ENCODE measurements at regions of chr10 and their contacts with region 1.

Region 1: GRCh38 chr10:114304017-114304570 is 65.0 kb downstream of the VWA2 start:
- DNase-seq: peak; percentile 79 to 88 (median 85)
- ATAC-seq: peak; percentile 87
- H3K4me3 ChIP-seq: no peak overlapping the region
- H3K27ac ChIP-seq: peak overlapping the region in 2 of 4 donors; percentile 15 to 28
- H3K4me1 ChIP-seq: peaks cover 10% of the 10 kb centered on the region
- H3K27me3 ChIP-seq: no peaks in the 10 kb centered on the region
- CTCF ChIP-seq: peak; percentile 32 to 83 (median 78)
- POLR2A ChIP-seq: no peak

Region 2: GRCh38 chr10:113907166-113907565 is 396.9 kb before region 1 on chr10:
- intact Hi-C with region 1: no loop called
- DNase-seq: no peak
- ATAC-seq: no peak
- H3K4me3 ChIP-seq: no peak overlapping the region
- H3K27ac ChIP-seq: no peak overlapping the region
- H3K4me1 ChIP-seq: peaks cover 8% of the 10 kb centered on the region
- H3K27me3 ChIP-seq: no peaks in the 10 kb centered on the region
- CTCF ChIP-seq: no peak
- POLR2A ChIP-seq: no peak

Region 3: DNA sequence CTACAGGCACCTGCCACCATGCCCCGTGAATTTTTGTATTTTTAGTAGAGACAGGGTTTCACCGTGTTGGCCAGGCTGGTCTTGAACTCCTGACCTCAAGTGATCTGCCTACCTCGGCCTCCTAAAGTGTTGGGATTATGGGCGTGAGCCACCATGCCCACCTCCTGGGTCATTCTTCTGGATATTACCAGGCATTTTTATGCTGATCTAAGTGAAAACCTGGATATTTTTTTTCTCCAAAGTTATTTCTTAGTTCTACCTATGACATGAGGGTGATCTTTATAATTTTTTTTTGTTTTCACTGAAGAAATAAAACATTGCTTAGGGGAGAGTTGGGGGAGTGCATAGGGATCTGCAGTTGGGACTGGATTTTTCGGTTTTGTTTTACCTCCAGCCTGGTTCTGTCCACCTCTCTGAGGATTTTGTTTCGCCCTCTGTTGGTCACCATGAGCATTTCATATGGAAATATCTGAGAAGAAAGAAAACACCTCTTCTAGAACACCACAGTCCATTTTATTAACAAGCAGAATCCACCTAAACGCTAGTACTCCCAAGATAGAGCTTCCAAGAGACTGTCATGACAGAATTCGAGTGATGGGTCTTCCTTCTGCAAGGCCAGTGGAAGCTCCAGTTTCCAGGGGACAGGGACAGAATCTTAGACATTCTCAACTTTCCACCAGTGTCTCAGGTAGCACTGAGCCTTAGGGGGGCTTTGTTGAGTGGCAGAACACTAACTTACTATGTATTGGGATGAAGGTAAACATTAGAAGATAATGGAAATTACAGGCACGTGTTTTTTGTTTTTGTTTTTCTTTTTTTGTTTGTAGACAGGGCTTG is 133.6 kb after region 1 on chr10:
- intact Hi-C with region 1: loop called (anchors 5 kb)
- DNase-seq: peak in 3 of 4 donors; percentile 24 to 31 (median 26)
- ATAC-seq: peak; percentile 82
- H3K4me3 ChIP-seq: no peak overlapping the region
- H3K27ac ChIP-seq: no peak overlapping the region
- H3K4me1 ChIP-seq: no peaks in the 10 kb centered on the region
- H3K27me3 ChIP-seq: no peaks in the 10 kb centered on the region
- CTCF ChIP-seq: peak in 6 of 7 experiments; percentile 36 to 72 (median 66)
- POLR2A ChIP-seq: no peak

Region 4: DNA sequence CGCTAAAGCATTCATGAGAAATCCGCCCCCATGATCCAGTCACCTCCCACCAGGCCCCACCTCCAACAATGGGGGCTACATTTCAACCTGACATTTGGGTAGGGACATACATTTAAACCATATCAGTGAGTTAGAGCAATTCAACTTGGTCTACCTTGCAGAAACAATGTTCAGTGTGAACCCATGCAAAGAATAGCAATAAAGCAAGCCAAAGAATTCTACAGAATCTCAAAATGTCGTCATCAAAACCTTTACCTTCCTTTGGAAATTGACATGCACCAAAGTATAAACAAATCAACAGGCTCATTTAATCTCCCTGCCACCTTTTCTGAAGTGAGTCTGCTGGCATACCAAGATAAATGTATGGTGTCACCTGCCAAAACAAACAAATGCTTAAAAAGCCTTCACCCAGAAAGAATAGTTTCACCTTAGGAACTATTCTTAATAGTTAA is 422.8 kb after region 1 on chr10:
- intact Hi-C with region 1: no loop called
- DNase-seq: no peak
- ATAC-seq: peak; percentile 42
- H3K4me3 ChIP-seq: no peak overlapping the region
- H3K27ac ChIP-seq: no peak overlapping the region
- H3K4me1 ChIP-seq: peaks cover 25% of the 10 kb centered on the region
- H3K27me3 ChIP-seq: no peaks in the 10 kb centered on the region
- CTCF ChIP-seq: no peak
- POLR2A ChIP-seq: no peak

Region 5: DNA sequence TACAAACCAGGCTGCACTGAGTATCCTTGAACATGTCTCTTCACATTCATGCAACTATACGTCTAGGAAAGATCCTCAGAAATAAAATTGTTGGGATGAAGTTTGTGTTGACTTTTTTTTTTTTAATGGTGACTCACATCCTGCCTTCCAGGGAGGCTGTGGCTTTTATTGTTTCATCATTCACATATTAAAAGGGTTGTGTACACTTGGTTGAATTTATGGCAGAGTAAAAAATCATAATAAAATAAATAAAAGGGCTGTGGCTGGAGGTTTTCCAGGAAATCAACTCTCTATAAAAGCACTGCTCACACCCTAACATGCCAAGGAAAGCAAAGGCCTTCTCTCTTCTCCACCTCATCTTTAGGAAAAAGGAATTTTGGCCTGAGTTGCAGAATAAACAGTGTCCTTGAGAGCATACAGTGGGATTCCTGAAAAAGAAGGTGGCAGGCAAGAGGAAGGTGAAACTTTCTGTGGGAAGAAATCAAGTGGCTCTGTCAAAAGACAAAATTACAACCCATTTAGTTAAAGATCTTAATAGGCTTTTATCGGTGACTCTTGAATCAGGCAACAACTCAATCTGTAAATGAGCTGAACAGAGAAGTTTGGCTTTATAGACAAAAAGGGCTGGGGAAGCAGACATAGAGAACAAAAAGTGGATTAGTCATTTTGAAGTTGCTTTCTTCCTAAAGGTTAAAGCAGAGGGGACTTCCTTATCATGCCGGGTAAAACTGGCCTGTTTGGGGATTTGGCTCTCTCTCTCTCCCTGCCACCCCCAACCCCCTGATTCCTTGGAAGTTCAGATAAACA is 475.9 kb after region 1 on chr10:
- intact Hi-C with region 1: loop called (anchors 10 kb)
- DNase-seq: no peak
- ATAC-seq: peak; percentile 48
- H3K4me3 ChIP-seq: no peak overlapping the region
- H3K27ac ChIP-seq: peak overlapping the region in 2 of 4 donors; percentile 2 to 31
- H3K4me1 ChIP-seq: no peaks in the 10 kb centered on the region
- H3K27me3 ChIP-seq: no peaks in the 10 kb centered on the region
- CTCF ChIP-seq: no peak
- POLR2A ChIP-seq: no peak

Measured in body of pancreas (tissue), 4 donors.